Left cardiac atrium (tissue), 4 donors: ENCODE measurements at regions of chr11 and their contacts with region 1.

Region 1: DNA sequence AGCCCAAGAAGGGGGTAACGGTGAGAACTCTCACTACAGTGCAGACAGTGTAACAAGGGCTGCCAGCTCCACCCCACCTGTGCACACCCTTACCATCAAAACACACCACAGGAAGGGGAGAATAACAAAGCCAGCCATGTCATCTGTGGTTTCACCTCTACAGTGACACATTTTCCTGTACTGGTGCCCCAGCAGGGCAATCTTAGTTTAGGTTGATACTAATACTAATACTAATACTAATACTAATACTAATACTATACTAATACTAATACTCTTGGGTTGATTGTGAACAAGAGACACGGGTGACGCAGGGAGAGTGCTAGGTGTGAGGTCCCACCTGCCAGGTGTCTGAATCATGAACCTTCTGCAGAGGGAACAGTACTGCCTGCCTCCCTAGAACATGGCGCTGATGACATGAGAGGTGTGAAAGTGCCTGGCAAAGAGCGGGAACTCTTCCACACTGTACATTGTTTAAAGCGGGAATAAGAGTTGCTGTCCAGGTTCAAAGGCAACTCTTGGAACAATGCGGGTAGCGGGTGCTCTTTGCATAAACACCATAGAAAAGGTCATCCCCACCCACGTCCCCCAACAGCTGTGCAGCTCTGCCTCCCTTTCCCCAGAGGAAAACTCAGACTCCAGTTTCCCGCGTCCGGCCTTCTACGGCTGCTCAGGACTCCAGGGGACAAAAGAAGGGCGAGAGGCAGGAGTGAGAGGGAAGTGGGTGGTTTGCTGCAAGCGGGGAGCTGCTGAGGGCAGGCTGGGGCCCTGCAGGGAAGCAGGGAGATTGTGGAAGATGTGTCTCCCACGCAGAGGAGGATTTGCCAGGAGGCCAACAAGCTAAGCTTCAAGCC is 25.0 kb upstream of the TMPRSS4 start:
- DNase-seq: no peak
- ATAC-seq: peak; percentile 23 to 73

Region 2: GRCh38 chr11:117807482-117808327 is 244.1 kb before region 1 on chr11:
- intact Hi-C with region 1: loop called in 1 of 2 experiments (anchors 2 kb)
- DNase-seq: peak; percentile 81
- ATAC-seq: peak; percentile 39 to 56

Region 3: DNA sequence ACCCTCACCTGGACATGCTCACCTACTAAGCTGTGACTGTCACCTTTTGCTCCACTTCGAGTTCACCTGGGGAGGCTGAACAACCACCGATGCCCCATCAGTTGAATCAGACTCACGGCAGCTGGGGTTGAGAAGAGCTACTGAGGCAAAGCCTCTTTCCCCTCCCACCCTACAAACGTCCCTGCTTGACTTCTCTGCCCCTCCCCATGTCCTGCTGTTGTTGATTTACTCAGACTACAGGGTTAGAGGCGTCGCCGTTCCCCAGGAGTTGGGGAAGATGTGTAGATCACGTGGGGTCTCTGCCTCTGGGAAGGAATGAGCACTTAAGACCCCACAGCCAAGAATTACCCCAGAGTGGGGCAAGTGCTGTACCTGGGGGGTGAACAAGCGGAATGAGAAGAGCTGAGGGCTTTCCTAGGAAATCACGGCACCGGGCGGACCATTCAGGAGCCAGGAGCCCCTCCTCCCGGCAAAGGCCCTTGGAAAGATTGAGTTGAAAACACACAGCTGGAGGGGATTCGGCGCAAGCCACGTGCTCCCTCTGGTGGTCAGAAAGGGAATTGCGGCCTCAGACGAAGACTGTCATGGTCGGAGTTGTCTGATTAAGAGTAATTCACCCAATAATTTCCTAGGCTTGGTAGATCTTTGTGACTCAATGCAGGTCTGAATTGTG is 234.3 kb before region 1 on chr11:
- intact Hi-C with region 1: loop called in 1 of 2 experiments (anchors 5 kb)
- DNase-seq: peak; percentile 84
- ATAC-seq: peak; percentile 63 to 72

Region 4: GRCh38 chr11:117843666-117844484 is 208.0 kb before region 1 on chr11:
- intact Hi-C with region 1: loop called (anchors 5 to 10 kb)
- DNase-seq: peak; percentile 82
- ATAC-seq: peak; percentile 66 to 71

Region 5: GRCh38 chr11:117946842-117947526 is 104.9 kb before region 1 on chr11:
- intact Hi-C with region 1: loop called (anchors 2 to 10 kb)
- DNase-seq: peak; percentile 91
- ATAC-seq: peak; percentile 92 to 94

Region 6: GRCh38 chr11:118002541-118003423 is 49.1 kb before region 1 on chr11:
- intact Hi-C with region 1: no loop called
- DNase-seq: peak; percentile 75
- ATAC-seq: peak; percentile 71 to 72

Region 7: DNA sequence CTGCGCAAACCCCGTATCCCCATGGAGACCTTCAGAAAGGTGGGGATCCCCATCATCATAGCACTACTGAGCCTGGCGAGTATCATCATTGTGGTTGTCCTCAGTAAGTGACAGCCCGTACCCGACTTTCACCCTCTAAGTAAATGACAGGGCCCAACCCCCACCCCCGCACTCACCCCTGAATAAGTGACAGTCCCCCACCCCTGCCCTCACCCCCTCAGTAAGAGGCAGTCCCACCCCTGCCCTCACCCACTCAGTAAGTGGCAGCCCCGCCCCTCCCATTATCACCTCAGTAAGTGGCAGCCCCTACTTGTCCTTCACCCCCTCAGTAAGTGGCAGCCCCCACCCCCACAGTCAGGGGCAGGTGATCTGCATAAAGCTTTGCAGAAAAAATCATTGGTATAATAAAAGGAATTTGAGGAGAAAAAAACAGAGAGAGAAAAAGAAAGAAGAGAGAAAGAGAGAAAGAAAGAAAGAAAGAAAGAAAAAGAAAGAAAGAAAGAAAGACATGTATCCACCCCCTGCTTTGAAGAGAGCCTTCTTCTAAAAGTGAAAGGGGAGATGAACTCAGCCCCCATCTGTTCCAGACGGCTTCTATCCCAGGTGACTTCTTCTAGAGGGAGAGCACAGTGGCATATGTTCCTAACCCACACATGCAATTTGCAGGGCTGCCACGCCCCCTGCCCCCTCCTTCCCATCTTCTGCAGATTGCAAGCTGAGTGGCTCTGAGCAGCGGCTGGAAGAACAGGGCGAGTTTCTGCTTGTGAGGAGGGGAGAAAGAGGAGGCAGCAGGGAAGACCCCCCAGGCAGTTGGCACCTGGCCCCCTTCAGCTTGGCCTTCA is 47.4 kb after region 1 on chr11:
- intact Hi-C with region 1: no loop called
- DNase-seq: no peak
- ATAC-seq: no peak